Transverse colon (tissue), 4 donors: ENCODE measurements at regions of chr19 and their contacts with region 1.

Region 1: DNA sequence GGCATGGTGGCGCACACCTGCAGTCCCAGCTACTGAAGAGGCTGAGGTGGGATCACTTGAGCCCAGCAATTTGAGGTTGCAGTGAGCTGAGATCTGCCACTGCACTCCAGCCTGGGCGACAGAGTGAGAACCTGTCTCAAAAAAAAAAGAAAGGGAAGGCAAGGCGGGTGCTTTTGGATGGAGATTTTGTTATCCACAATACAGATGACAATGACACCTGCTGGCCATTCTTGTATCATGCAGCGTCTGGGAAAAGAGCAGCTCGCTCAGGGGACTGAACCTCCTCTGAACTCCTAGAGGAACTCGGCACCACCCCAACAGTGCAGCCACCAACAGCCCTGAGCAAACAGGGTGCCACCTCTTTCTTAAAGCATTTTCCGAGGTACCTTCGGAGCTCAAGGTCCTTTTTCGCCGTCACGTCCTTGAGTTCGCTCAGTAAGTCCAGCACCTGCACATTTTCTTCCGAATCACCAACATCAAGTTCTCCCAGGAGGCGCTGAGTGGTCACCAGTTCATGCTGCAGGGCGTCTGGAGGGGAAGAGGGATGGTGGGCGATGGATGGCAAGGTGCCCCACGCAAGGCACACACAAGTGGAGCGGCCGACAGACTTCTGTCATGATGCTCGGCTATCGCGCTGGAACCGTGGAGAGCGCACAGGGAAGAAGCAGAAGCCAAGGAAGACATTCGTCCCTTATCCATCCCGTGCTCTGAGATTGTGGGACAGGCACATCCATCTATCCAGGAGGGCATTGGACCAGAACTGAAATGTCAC is 22.6 kb downstream of the HAUS8 start:
- DNase-seq: peak; percentile 64
- H3K4me3 ChIP-seq: no peak overlapping the region
- H3K27ac ChIP-seq: no peak overlapping the region
- H3K4me1 ChIP-seq: peaks cover 0 to 8% (median 0%) of the 10 kb centered on the region in 4 donors
- H3K27me3 ChIP-seq: no peaks in the 10 kb centered on the region
- CTCF ChIP-seq: peak; percentile 41 to 75 (median 68)
- EP300 ChIP-seq: no peak
- POLR2A ChIP-seq: no peak

Region 2: DNA sequence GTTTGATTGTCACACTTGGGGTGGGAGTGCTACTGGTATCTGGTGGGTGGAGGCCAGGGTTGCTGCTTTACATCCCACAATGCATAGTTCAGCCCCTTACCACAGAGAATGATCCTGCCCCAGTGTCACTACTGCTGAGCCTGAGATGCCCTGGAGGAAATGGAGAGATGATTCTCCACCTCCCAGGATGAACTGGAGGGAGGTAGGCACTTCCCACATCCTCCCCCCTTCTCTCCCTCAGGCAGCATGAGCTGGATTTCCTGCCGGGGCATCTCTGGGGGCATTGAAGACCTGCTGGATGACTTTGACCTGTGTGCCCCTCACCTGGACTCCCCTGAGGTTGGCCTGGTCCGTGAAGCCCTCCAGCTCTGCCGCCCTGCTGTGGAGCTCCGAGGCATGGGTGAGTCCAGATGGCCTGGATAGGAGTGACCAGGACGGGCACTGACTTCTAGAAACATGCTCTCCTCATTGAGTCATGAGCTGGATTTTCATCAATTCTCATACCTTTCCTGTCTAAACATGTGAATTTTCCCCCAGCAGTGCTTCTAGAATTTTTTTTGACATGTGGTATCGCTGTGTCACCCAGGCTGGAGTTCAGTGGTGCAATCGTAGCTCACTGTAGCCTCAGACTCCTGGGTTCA is 287.7 kb before region 1 on chr19:
- in situ Hi-C with region 1: loop called in 3 of 4 experiments (anchors 10 to 25 kb)
- intact Hi-C with region 1: loop called (anchors 10 kb)
- DNase-seq: no peak
- H3K4me3 ChIP-seq: no peak overlapping the region
- H3K27ac ChIP-seq: no peak overlapping the region
- H3K4me1 ChIP-seq: no peaks in the 10 kb centered on the region
- H3K27me3 ChIP-seq: peaks cover 9% of the 10 kb centered on the region
- CTCF ChIP-seq: no peak
- EP300 ChIP-seq: no peak
- POLR2A ChIP-seq: no peak

Region 3: GRCh38 chr19:16771618-16772017 is 281.0 kb before region 1 on chr19:
- in situ Hi-C with region 1: loop called in 3 of 4 experiments (anchors 10 to 25 kb)
- intact Hi-C with region 1: loop called (anchors 10 kb)
- DNase-seq: peak; percentile 82
- H3K4me3 ChIP-seq: no peak overlapping the region
- H3K27ac ChIP-seq: no peak overlapping the region
- H3K4me1 ChIP-seq: no peaks in the 10 kb centered on the region
- H3K27me3 ChIP-seq: no peaks in the 10 kb centered on the region
- CTCF ChIP-seq: peak; percentile 84 to 90 (median 86)
- EP300 ChIP-seq: no peak
- POLR2A ChIP-seq: no peak

Region 4: DNA sequence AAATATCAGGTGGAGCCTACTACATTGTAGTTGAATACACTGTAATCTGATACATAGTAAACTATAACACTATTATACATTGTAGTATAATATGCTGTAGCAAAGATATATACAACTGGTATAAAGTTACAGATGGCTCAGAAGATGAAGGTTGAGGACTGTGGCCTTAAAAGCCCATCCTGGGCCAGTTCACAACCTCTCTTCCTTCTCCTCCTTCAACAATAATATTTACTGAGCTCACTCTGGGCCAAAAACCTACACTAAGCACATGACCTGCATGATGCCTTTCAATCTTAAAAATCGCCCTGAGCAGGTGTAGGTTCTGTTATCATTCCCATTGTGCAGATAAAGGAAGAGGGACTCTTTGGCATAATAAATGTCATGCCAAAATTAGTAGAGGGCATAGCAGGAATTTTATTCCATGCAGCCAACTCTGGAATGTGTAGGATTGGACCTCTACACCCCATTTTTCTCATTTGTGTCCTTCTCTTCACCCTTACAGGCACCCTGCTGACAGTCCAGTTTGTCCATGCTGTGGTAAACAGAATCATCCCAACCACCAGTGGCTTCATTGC is 238.0 kb before region 1 on chr19:
- in situ Hi-C with region 1: no loop called
- intact Hi-C with region 1: no loop called
- DNase-seq: no peak
- H3K4me3 ChIP-seq: no peak overlapping the region
- H3K27ac ChIP-seq: no peak overlapping the region
- H3K4me1 ChIP-seq: no peaks in the 10 kb centered on the region
- H3K27me3 ChIP-seq: no peaks in the 10 kb centered on the region
- CTCF ChIP-seq: no peak
- EP300 ChIP-seq: no peak
- POLR2A ChIP-seq: no peak

Region 5: GRCh38 chr19:17292286-17293097 is 239.9 kb after region 1 on chr19:
- in situ Hi-C with region 1: loop called in 1 of 4 experiments (anchors 25 kb)
- intact Hi-C with region 1: no loop called
- DNase-seq: peak; percentile 85
- H3K4me3 ChIP-seq: peak overlapping the region; percentile 36 to 61 (median 50)
- H3K27ac ChIP-seq: peak overlapping the region; percentile 62 to 90 (median 82)
- H3K4me1 ChIP-seq: peaks cover 0 to 14% (median 9%) of the 10 kb centered on the region in 4 donors
- H3K27me3 ChIP-seq: no peaks in the 10 kb centered on the region
- CTCF ChIP-seq: peak; percentile 62 to 83 (median 70)
- EP300 ChIP-seq: no peak
- POLR2A ChIP-seq: peak; percentile 52